B cell (primary cell): ENCODE measurements at regions of chr17 and their contacts with region 1.

Region 1: DNA sequence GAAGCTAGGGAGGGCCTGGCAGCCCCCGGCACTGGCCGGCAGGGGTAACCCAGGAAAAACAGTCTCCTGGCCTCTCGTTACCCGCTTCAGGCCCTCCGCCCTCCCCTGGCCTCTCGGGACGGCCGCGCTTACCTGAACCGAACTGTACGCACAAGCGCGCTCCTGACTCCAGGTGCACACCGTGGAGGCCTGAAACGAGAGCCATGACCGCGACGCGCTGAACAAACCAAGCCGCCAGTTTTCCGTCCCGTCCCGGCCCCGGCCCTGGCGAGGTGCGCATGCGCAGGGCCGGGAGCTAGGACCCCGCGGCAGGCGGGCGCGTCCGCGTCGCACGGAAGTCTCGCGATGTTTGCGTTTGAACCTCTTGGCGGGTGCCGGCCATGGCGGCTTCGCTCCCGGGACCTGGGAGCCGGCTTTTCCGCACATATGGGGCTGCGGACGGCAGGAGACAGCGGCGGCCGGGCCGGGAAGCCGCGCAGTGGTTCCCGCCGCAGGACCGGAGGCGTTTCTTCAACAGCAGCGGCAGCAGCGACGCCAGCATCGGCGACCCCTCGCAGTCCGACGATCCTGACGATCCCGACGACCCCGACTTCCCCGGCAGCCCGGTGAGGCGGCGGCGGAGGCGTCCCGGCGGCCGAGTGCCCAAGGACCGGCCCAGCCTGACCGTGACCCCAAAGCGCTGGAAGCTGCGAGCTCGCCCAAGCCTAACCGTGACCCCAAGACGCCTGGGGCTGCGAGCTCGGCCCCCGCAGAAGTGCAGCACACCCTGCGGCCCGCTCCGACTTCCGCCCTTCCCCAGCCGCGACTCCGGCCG is at the start of gene HASPIN:
- DNase-seq: peak; percentile 95
- ATAC-seq: peak; percentile 72
- H3K4me3 ChIP-seq: peak within 1 kb of the TSS; percentile 76 to 96 (median 91)
- H3K4me3 Mint-ChIP-seq: peak within 1 kb of the TSS; percentile 96
- H3K27ac ChIP-seq: peak within 1 kb of the TSS; percentile 49 to 78
- H3K27ac Mint-ChIP-seq: peak within 1 kb of the TSS; percentile 94
- H3K4me1 ChIP-seq: peaks cover 48 to 69% of the 10 kb centered on the region in 2 donors
- H3K4me1 Mint-ChIP-seq: peaks cover 60% of the 10 kb centered on the region
- H3K27me3 ChIP-seq: no peaks in the 10 kb centered on the region
- H3K27me3 Mint-ChIP-seq: no peaks in the 10 kb centered on the region
- CTCF ChIP-seq: peak; percentile 26
- total RNA-seq, gene HASPIN: 2.4 and 3.1 TPM in 2 replicates

Region 2: GRCh38 chr17:3571043-3571900 is 152.5 kb before region 1 on chr17:
- CTCF ChIA-PET with region 1: no interaction called
- POLR2A ChIA-PET with region 1: no interaction called
- intact Hi-C with region 1: no loop called
- DNase-seq: peak; percentile 48
- ATAC-seq: peak; percentile 79
- H3K4me3 ChIP-seq: no peak overlapping the region
- H3K4me3 Mint-ChIP-seq: no peak overlapping the region
- H3K27ac ChIP-seq: no peak overlapping the region
- H3K27ac Mint-ChIP-seq: no peak overlapping the region
- H3K4me1 ChIP-seq: no peaks in the 10 kb centered on the region
- H3K4me1 Mint-ChIP-seq: no peaks in the 10 kb centered on the region
- H3K27me3 ChIP-seq: no peaks in the 10 kb centered on the region
- H3K27me3 Mint-ChIP-seq: no peaks in the 10 kb centered on the region
- CTCF ChIP-seq: no peak

Region 3: GRCh38 chr17:3695723-3696411 is 27.9 kb before region 1 on chr17 and contains the start of gene P2RX5:
- CTCF ChIA-PET with region 1: interaction called, 37 read pairs
- POLR2A ChIA-PET with region 1: interaction called, 28 read pairs
- intact Hi-C with region 1: loop called (anchors 1 kb)
- DNase-seq: peak; percentile 80
- ATAC-seq: peak; percentile 52
- H3K4me3 ChIP-seq: peak within 1 kb of the TSS; percentile 58 to 93 (median 83)
- H3K4me3 Mint-ChIP-seq: peak within 1 kb of the TSS; percentile 100
- H3K27ac ChIP-seq: peak within 1 kb of the TSS; percentile 76 to 91
- H3K27ac Mint-ChIP-seq: peak within 1 kb of the TSS; percentile 99
- H3K4me1 ChIP-seq: peaks cover 35 to 65% of the 10 kb centered on the region in 2 donors
- H3K4me1 Mint-ChIP-seq: peaks cover 61% of the 10 kb centered on the region
- H3K27me3 ChIP-seq: no peaks in the 10 kb centered on the region
- H3K27me3 Mint-ChIP-seq: no peaks in the 10 kb centered on the region
- CTCF ChIP-seq: no peak
- total RNA-seq, gene P2RX5: 405 and 410 TPM in 2 replicates

Region 4: DNA sequence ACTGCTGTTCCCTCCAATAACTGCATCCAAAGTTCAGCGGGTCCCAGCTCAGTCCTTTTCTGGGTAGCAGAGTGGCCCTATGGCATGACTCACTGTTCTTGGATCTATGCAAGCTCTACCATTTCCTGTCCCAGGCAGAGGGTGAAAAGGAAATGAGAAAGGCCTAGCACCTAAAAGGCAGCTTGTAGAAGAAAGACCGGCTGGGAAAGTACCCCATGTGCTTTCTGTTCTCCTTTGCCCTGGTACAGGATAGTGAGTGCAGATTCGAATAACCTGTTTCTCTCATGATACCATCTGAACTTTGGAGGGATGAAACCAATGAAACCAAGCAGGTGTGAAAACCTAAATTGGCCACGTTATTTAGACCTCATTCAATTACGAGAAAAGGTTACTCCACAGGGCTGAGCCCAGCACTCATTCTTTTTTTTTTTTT is 12.8 kb before region 1 on chr17:
- CTCF ChIA-PET with region 1: interaction called, 16 read pairs
- POLR2A ChIA-PET with region 1: interaction called, 13 read pairs
- intact Hi-C with region 1: loop called (anchors 1 kb)
- DNase-seq: peak; percentile 95
- ATAC-seq: peak; percentile 92
- H3K4me3 ChIP-seq: peak overlapping the region in 4 of 5 experiments; percentile 11 to 54 (median 35)
- H3K4me3 Mint-ChIP-seq: peak overlapping the region; percentile 85
- H3K27ac ChIP-seq: peak overlapping the region; percentile 60 to 82
- H3K27ac Mint-ChIP-seq: peak overlapping the region; percentile 96
- H3K4me1 ChIP-seq: peaks cover 38 to 54% of the 10 kb centered on the region in 2 donors
- H3K4me1 Mint-ChIP-seq: peaks cover 57% of the 10 kb centered on the region
- H3K27me3 ChIP-seq: no peaks in the 10 kb centered on the region
- H3K27me3 Mint-ChIP-seq: no peaks in the 10 kb centered on the region
- CTCF ChIP-seq: no peak

Region 5: GRCh38 chr17:4017377-4017776 is 293.6 kb after region 1 on chr17:
- CTCF ChIA-PET with region 1: no interaction called
- POLR2A ChIA-PET with region 1: no interaction called
- intact Hi-C with region 1: no loop called
- DNase-seq: no peak
- ATAC-seq: no peak
- H3K4me3 ChIP-seq: no peak overlapping the region
- H3K4me3 Mint-ChIP-seq: no peak overlapping the region
- H3K27ac ChIP-seq: no peak overlapping the region
- H3K27ac Mint-ChIP-seq: no peak overlapping the region
- H3K4me1 ChIP-seq: no peaks in the 10 kb centered on the region
- H3K4me1 Mint-ChIP-seq: no peaks in the 10 kb centered on the region
- H3K27me3 ChIP-seq: no peaks in the 10 kb centered on the region
- H3K27me3 Mint-ChIP-seq: no peaks in the 10 kb centered on the region
- CTCF ChIP-seq: no peak